Activated CD4-positive, alpha-beta memory T cell treated with anti-CD3 and anti-CD28 coated beads for 36 hours (primary cell): ENCODE measurements at regions of chr2 and their contacts with region 1.

Region 1: GRCh38 chr2:231925303-231926179 is 655 bp downstream of the NPPC start:
- DNase-seq: peak; percentile 75
- H3K4me3 Mint-ChIP-seq: peak overlapping the region; percentile 26
- H3K27ac Mint-ChIP-seq: no peak overlapping the region
- H3K4me1 Mint-ChIP-seq: peaks cover 10% of the 10 kb centered on the region
- H3K27me3 Mint-ChIP-seq: peaks cover 54% of the 10 kb centered on the region

Region 2: DNA sequence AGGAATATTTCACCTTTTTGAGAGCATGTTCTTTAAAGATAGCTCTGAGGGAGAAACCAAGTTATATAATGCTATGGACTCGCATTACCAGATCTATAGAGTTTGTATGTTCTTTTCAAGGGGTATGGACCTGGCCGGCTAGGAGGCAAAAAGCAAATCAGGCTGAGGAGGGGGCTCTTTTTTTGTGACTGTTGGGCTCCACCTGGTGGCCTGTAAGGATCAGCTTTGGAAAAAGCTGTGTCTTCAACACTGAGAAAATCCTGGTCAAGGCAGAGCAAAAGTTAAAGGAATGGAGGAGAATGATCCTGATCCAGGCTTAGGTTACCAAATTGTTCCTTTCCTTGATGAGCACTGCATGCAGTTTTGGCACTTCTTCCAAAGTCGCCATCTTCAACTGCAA is 216.5 kb after region 1 on chr2:
- CTCF ChIA-PET with region 1: interaction called, 127 read pairs
- POLR2A ChIA-PET with region 1: no interaction called
- intact Hi-C with region 1: loop called (anchors 1 kb)
- DNase-seq: peak; percentile 50
- H3K4me3 Mint-ChIP-seq: no peak overlapping the region
- H3K27ac Mint-ChIP-seq: no peak overlapping the region
- H3K4me1 Mint-ChIP-seq: peaks cover 19% of the 10 kb centered on the region
- H3K27me3 Mint-ChIP-seq: no peaks in the 10 kb centered on the region

Region 3: GRCh38 chr2:232230557-232230956 is 305.0 kb after region 1 on chr2:
- CTCF ChIA-PET with region 1: interaction called, 16 read pairs
- POLR2A ChIA-PET with region 1: no interaction called
- intact Hi-C with region 1: loop called (anchors 5 kb)
- DNase-seq: peak; percentile 46
- H3K4me3 Mint-ChIP-seq: no peak overlapping the region
- H3K27ac Mint-ChIP-seq: no peak overlapping the region
- H3K4me1 Mint-ChIP-seq: peaks cover 11% of the 10 kb centered on the region
- H3K27me3 Mint-ChIP-seq: no peaks in the 10 kb centered on the region

Region 4: GRCh38 chr2:232292395-232293154 is 367.0 kb after region 1 on chr2:
- CTCF ChIA-PET with region 1: interaction called, 20 read pairs
- POLR2A ChIA-PET with region 1: no interaction called
- intact Hi-C with region 1: no loop called
- DNase-seq: peak; percentile 73
- H3K4me3 Mint-ChIP-seq: no peak overlapping the region
- H3K27ac Mint-ChIP-seq: no peak overlapping the region
- H3K4me1 Mint-ChIP-seq: no peaks in the 10 kb centered on the region
- H3K27me3 Mint-ChIP-seq: no peaks in the 10 kb centered on the region